ENCODE measurements at regions of chr5 and their contacts with region 1.

Region 1: GRCh38 chr5:33457126-33457525 is 16.4 kb downstream of the TARS1 start:
- DNase-seq: no peak
- ATAC-seq: no peak
- H3K4me3 ChIP-seq: no peak overlapping the region
- H3K27ac ChIP-seq: no peak overlapping the region
- H3K4me1 ChIP-seq: no peaks in the 10 kb centered on the region
- H3K27me3 ChIP-seq: no peaks in the 10 kb centered on the region
- CTCF ChIP-seq: no peak

Region 2: DNA sequence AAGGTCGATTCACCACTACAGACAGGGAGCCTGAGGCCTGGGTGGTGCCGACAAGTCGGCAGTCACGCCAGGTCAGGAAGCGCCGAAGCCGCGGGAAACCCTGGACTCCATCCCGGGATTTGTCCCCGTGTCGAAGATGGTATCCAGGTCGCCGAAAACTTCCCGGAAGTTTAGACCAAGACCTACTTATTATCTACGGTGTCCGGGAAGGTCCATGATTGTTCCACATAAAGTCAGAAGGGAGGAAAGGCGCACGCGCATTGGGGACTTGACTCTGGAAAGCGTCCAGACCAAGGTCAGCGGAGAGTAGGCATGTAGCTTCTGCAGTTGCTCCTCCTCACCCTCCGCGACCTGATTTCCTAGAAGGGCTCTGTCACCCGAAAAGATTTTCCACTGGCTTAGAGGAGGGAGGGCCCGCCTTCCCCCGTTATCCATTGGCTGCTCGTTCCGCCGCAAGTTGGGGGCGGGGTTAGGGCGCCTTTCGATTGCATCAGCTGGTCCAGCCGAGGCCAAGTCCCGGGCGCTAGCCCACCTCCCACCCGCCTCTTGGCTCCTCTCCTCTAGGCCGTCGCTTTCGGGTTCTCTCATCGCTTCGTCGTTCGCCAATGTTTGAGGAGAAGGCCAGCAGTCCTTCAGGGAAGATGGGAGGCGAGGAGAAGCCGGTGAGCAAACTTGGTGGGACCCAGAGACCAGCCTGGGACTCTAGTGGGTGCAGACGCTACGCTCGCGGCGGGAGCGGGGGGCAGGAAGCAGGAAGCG is 16.5 kb before region 1 on chr5 and contains the start of gene TARS1:
- intact Hi-C with region 1: no loop called
- DNase-seq: peak; percentile 98
- ATAC-seq: peak; percentile 97 to 98 (median 97)
- H3K4me3 ChIP-seq: peak within 1 kb of the TSS; percentile 79
- H3K27ac ChIP-seq: peak within 1 kb of the TSS; percentile 88
- H3K4me1 ChIP-seq: peaks cover 26% of the 10 kb centered on the region
- H3K27me3 ChIP-seq: no peaks in the 10 kb centered on the region
- CTCF ChIP-seq: no peak
- total RNA-seq, gene TARS1: 50.8 to 89.1 (median 62.8) TPM

Region 3: GRCh38 chr5:34929720-34930461 is 1472.8 kb after region 1 on chr5:
- intact Hi-C with region 1: loop called in 1 of 2 experiments (anchors 10 kb)
- DNase-seq: peak; percentile 92 to 96
- ATAC-seq: peak; percentile 79 to 85 (median 82)
- H3K4me3 ChIP-seq: peak overlapping the region; percentile 91
- H3K27ac ChIP-seq: peak overlapping the region; percentile 97
- H3K4me1 ChIP-seq: peaks cover 12% of the 10 kb centered on the region
- H3K27me3 ChIP-seq: no peaks in the 10 kb centered on the region
- CTCF ChIP-seq: no peak

Measured in psoas muscle (tissue), 8 donors.